ENCODE measurements at regions of chr9 and their contacts with region 1.

Region 1: DNA sequence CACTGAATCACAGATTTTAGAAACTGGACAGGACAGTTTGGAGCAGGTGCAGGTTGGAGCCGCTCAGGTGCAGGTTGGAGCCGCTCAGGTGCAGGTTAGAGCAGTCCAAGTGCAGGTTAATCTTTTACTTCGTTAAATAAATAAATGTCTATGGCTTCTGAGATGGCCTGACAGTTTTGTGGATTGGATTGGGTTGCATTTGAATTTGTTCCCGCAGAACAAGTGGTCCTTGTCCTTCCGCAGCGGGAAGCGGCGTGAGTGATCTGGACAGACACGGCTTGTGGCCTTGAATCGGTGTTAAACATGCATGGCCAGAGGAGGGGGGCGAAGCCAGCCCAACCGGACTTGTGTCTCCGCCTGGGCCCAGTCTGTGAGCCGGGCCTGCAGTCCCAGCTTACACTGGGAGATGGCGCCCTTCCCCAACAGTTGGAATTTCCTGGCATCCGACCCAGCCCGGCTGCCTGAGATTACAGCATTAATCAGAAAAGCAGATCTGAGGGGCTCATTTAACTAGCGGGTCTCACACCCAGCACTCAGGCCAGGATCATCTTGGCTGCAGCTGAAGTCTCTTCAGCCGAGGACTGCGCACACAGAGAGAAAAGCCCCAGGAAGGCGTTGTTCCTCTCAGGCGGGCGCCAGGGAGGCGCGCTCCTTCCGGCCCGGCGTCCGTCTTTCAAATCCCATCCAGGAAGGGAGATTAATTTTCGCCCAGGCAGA is 1.5 kb upstream of the OLFM1 start:
- DNase-seq: no peak
- H3K4me3 ChIP-seq: peak overlapping the region; percentile 28
- H3K27me3 ChIP-seq: peaks cover 21% of the 10 kb centered on the region
- CTCF ChIP-seq: peak; percentile 84

Region 2: DNA sequence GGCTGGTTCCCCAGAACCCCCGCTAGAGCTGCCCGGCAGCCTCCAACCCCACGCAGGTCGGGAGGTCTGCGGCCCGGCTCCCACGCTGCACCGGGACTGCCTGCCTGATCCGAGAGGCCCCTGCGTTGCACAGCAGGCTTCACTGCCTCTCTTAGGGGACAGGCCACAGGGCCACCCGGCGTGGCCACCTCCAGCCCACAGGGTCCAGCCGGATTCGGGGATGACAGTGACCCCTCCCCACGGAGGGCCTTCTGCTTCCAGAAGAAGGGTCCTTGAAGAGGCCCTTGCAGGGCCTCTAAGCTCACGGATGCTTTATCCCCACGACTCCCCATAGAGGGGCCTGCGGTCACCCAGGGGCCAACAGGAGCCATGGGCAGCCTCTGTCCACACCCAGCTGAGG is 327.5 kb after region 1 on chr9:
- CTCF ChIA-PET with region 1: interaction called, 15 read pairs
- POLR2A ChIA-PET with region 1: no interaction called
- DNase-seq: no peak
- H3K4me3 ChIP-seq: no peak overlapping the region
- H3K27me3 ChIP-seq: no peaks in the 10 kb centered on the region; the same call in 1 of the 2 replicates
- CTCF ChIP-seq: no peak

Measured in BJ (cell line).